WTC11 (cell line): ENCODE measurements at regions of chr1 and their contacts with region 1.

Region 1: DNA sequence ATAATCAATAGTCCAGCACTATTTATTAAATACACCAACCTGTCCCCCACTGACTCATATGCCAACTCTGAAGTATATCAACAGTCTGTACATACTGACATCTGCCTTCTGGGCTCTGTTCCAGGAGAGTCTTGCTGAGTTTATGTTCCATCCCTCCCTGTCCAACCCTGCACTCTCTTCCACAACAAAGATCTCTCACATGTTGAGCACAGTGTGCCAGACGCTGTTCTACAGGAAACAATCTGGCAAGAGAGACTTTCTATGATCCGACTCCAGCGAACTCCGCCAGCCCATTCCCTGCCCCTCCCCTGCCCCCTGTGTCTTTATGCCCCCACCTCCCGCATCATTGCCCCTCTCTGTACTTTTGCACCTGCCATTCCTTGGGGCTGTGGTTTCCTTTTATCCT is 3.4 kb downstream of the LACTBL1 start:
- DNase-seq: no peak
- ATAC-seq: no peak
- H3K4me3 Mint-ChIP-seq: no peak overlapping the region
- H3K27ac Mint-ChIP-seq: no peak overlapping the region
- H3K4me1 Mint-ChIP-seq: peaks cover 12% of the 10 kb centered on the region
- H3K27me3 Mint-ChIP-seq: peaks cover 17% of the 10 kb centered on the region
- CTCF ChIP-seq: no peak

Region 2: GRCh38 chr1:22952694-22953391 is 16.5 kb before region 1 on chr1:
- CTCF ChIA-PET with region 1: interaction called, 18 read pairs
- POLR2A ChIA-PET with region 1: no interaction called
- DNase-seq: peak; percentile 33
- ATAC-seq: no peak
- H3K4me3 Mint-ChIP-seq: peak overlapping the region; percentile 18; the same call in 1 of the 2 replicates
- H3K27ac Mint-ChIP-seq: no peak overlapping the region
- H3K4me1 Mint-ChIP-seq: no peaks in the 10 kb centered on the region
- H3K27me3 Mint-ChIP-seq: peaks cover 50% of the 10 kb centered on the region
- CTCF ChIP-seq: no peak